Tibial artery (tissue), 4 donors: ENCODE measurements at regions of chr6 and their contacts with region 1.

Region 1: GRCh38 chr6:151475653-151476523 is 17.9 kb upstream of the CCDC170 start:
- DNase-seq: no peak
- H3K4me3 ChIP-seq: no peak overlapping the region
- H3K27ac ChIP-seq: no peak overlapping the region
- H3K4me1 ChIP-seq: peaks cover 0 to 5% (median 1%) of the 10 kb centered on the region in 4 donors
- H3K27me3 ChIP-seq: no peaks in the 10 kb centered on the region
- CTCF ChIP-seq: peak; percentile 78 to 85

Region 2: DNA sequence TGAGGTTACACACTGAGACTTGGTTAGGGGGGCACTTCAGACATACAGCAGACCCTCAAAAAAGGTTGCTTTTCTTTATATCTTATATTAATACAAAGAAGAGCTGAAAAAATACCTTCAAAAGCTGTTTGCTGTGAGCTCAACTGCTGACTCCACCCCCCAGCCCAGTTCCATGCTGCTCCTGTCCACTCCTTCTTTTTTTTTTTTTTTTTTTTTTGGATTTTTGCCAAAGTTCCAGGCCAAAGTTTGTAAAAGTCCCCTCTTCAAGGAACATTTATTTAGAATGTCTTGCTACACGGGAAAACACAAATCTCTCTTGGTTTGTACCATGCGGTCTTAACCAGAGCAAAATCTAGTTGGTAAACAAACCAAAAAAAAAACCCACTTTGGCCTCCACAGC is 321.5 kb before region 1 on chr6:
- intact Hi-C with region 1: no loop called
- DNase-seq: peak in 1 of 2 donors; percentile 28
- H3K4me3 ChIP-seq: no peak overlapping the region
- H3K27ac ChIP-seq: no peak overlapping the region
- H3K4me1 ChIP-seq: peaks cover 0 to 4% (median 0%) of the 10 kb centered on the region in 4 donors
- H3K27me3 ChIP-seq: no peaks in the 10 kb centered on the region
- CTCF ChIP-seq: no peak

Region 3: DNA sequence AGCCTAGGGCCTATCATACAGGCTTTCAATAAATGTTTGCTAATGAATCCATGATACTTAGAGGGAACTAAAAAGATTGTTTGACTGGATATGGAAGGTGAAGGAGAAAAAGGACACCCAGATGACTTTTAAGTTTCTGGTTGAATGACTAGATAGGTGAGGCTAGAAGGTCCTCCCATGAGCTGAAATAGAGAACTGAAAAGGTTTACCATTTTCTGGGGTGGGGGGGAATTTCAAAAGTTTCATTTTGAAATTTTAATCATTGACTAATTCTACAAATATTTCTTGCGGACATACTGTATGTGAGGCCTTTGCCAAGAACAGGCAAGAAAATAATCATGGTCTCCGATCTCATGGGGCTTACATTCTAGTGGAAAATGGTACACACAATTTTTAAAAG is 66.6 kb before region 1 on chr6:
- intact Hi-C with region 1: loop called (anchors 5 kb)
- DNase-seq: no peak
- H3K4me3 ChIP-seq: no peak overlapping the region
- H3K27ac ChIP-seq: no peak overlapping the region
- H3K4me1 ChIP-seq: peaks cover 0 to 20% (median 6%) of the 10 kb centered on the region in 4 donors
- H3K27me3 ChIP-seq: no peaks in the 10 kb centered on the region
- CTCF ChIP-seq: no peak

Region 4: DNA sequence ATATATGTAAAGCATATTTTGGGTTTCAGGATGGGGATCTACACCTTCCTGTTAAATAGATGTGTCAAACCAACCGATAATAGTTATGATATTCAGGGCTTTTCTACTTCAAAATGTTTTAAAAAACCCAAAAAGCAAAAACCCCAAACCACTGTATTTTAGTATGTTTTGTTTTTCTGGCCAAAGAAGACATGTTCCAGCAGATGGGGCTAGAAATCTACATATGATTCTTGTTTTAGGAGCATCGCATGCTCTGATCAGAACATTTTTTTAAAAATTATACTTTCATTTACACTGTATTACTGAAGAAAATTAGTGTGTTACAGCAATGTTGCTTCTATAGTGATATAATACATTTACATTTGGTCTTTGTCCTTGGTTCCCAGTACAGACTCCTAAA is 35.0 kb before region 1 on chr6:
- intact Hi-C with region 1: loop called (anchors 5 kb)
- DNase-seq: no peak
- H3K4me3 ChIP-seq: peak overlapping the region; percentile 2 to 17
- H3K27ac ChIP-seq: peak overlapping the region; percentile 69 to 74
- H3K4me1 ChIP-seq: peaks cover 0 to 95% (median 41%) of the 10 kb centered on the region in 4 donors
- H3K27me3 ChIP-seq: no peaks in the 10 kb centered on the region
- CTCF ChIP-seq: peak; percentile 61 to 67

Region 5: DNA sequence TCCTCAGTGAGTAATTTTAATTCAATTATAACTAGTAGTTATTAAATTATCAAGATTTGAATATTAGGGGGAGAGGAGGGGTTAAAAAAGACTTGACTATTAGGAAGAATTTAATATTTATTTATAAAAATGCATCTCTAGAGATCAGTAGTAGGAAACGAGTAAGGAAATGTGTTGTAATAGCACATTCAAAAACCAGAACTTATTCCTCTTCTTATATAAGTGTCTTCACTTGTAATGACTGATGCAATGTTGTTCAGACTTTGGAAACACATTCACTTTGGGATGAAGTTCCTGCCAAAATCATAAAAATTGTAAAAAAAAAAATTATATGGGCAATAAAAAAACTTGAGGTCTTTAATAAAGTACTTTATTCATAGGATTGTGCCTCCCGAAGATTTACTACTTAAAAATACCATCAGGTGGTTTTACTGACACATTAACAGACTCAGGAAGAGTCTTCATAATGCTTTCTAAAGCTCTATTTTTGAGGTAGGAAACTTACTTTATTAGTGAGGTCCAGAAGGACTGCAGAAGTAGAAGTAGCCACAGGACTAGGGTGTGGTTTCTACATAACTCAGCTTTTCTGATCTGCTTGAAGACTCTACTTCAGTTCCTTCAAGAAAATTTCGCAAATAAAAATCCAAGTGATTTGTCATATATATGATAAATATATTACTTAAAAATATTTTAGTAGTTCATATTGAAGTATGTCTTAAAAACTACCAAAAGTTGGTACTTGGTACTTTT is 77.7 kb after region 1 on chr6:
- intact Hi-C with region 1: no loop called
- DNase-seq: no peak
- H3K4me3 ChIP-seq: no peak overlapping the region
- H3K27ac ChIP-seq: no peak overlapping the region
- H3K4me1 ChIP-seq: no peaks in the 10 kb centered on the region
- H3K27me3 ChIP-seq: no peaks in the 10 kb centered on the region
- CTCF ChIP-seq: no peak